Heart left ventricle (tissue), 16 donors: ENCODE measurements at regions of chr7 and their contacts with region 1.

Region 1: GRCh38 chr7:134690016-134690415 is 43.4 kb downstream of the BPGM start:
- DNase-seq: peak in 1 of 5 donors; percentile 39
- ATAC-seq: peak; percentile 63 to 89 (median 82)
- H3K4me3 ChIP-seq: peak overlapping the region in 11 of 12 donors; percentile 8 to 58 (median 45)
- H3K27ac ChIP-seq: peak overlapping the region in 9 of 12 donors; percentile 38 to 80 (median 47)
- H3K4me1 ChIP-seq: peaks cover 0 to 33% (median 7%) of the 10 kb centered on the region in 12 donors
- H3K27me3 ChIP-seq: no peaks in the 10 kb centered on the region
- CTCF ChIP-seq: peak; percentile 18 to 78 (median 58)
- POLR2A ChIP-seq: no peak

Region 2: DNA sequence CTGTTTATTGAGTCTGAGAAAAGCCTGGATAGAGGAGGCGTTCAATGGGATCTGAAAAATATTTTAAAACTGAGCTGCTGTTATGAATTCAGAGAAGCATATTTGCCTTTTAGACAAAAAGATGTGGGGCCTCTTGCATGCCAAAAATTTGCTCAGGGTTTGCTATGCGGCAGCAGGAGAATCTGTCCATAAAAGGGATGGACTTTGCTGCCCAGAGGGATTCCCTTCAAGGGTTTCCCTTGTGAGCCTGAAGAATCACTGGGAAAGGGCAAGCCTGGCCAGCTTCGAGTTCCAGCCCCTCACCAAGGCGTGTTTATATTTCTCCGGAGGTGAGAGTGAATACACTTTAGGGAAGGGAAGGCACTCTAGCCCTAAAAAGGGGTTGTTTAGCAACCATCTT is 33.9 kb after region 1 on chr7:
- intact Hi-C with region 1: loop called in 1 of 10 experiments (anchors 2 kb)
- DNase-seq: peak in 1 of 5 donors; percentile 34
- ATAC-seq: no peak
- H3K4me3 ChIP-seq: no peak overlapping the region
- H3K27ac ChIP-seq: peak overlapping the region in 9 of 12 donors; percentile 1 to 75 (median 34)
- H3K4me1 ChIP-seq: peaks cover 0 to 42% (median 6%) of the 10 kb centered on the region in 12 donors
- H3K27me3 ChIP-seq: no peaks in the 10 kb centered on the region
- CTCF ChIP-seq: no peak
- POLR2A ChIP-seq: no peak

Region 3: GRCh38 chr7:134750083-134751062 is 60.4 kb after region 1 on chr7:
- intact Hi-C with region 1: loop called in 9 of 10 experiments (anchors 2 to 10 kb)
- DNase-seq: peak; percentile 42 to 66 (median 45)
- ATAC-seq: peak in 3 of 4 donors; percentile 66 to 73 (median 72)
- H3K4me3 ChIP-seq: no peak overlapping the region
- H3K27ac ChIP-seq: no peak overlapping the region
- H3K4me1 ChIP-seq: peaks cover 0 to 12% (median 0%) of the 10 kb centered on the region in 12 donors
- H3K27me3 ChIP-seq: no peaks in the 10 kb centered on the region
- CTCF ChIP-seq: peak; percentile 46 to 77 (median 64)
- POLR2A ChIP-seq: no peak

Region 4: DNA sequence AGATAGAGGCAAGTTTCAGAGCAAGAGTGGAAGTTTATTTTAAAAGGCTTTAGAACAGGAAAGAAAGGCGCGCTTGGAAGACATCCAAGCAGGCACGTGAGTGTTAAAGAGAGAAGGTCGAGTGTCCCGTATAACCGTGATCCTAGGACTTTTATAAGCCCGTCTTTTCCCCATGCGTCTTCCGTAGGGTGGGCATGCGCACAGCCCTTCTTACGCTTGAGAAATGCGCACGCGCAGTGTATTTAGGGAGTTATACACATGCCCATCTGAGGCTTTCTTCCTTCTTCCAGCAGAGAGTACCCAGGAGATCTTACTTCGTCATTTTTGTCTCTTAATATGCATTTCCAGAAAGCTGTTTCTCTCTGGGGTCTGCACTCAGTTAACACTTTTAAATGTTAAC is 141.8 kb after region 1 on chr7:
- intact Hi-C with region 1: loop called in 1 of 10 experiments (anchors 10 kb)
- DNase-seq: peak in 4 of 5 donors; percentile 27 to 68 (median 46)
- ATAC-seq: peak in 2 of 4 donors; percentile 10 to 12
- H3K4me3 ChIP-seq: peak overlapping the region in 6 of 12 donors; percentile 7 to 35 (median 21)
- H3K27ac ChIP-seq: peak overlapping the region in 10 of 12 donors; percentile 28 to 87 (median 58)
- H3K4me1 ChIP-seq: peaks cover 0 to 94% (median 55%) of the 10 kb centered on the region in 12 donors
- H3K27me3 ChIP-seq: no peaks in the 10 kb centered on the region
- CTCF ChIP-seq: no peak
- POLR2A ChIP-seq: no peak

Region 5: DNA sequence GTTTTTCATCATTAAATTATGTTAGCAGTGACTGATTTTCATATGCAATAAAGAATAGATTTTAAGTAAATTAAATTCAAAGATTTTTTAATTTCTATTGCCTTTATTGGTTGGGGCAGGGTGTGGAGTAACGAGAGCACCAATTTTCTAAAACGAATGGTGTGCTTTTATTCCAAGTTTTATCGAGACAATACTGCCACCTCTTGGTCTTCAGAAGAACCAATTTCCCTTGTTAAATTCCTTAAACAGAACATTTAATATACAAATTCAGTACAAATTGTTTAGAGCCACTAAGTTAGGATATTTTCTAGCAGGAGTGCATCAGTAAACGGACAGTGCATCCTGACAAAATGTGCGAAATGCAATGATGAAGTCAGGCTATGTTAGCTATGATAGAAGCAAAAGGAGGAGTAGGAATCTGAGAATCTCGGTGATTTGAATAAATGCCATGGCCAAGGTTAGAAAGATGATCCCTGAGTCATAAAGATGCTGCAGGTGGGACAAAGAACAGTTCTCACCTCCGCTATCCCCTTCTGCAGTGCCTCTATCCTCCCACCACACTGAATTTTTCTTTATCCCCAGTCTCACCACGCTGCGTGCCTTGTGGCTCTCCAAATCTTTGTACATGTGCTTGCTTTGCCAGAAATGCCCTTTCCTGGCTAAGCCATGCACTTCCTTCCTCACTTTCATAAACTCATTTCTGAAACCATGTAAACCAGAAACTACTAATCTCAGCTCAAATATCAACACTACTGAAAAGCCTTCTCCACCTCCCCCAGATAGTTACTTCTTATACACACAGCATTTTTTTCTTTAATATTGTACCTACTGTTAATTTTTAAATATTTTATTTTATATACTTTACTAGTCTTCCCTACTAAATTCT is 264.4 kb after region 1 on chr7:
- intact Hi-C with region 1: loop called in 9 of 10 experiments (anchors 2 to 5 kb)
- DNase-seq: no peak
- ATAC-seq: peak in 1 of 4 donors; percentile 48
- H3K4me3 ChIP-seq: no peak overlapping the region
- H3K27ac ChIP-seq: no peak overlapping the region
- H3K4me1 ChIP-seq: no peaks in the 10 kb centered on the region
- H3K27me3 ChIP-seq: no peaks in the 10 kb centered on the region
- CTCF ChIP-seq: peak; percentile 40 to 70 (median 53)
- POLR2A ChIP-seq: no peak

Region 6: GRCh38 chr7:135274495-135275268 is 584.7 kb after region 1 on chr7:
- intact Hi-C with region 1: loop called in 1 of 10 experiments (anchors 10 kb)
- DNase-seq: peak in 3 of 5 donors; percentile 45 to 52 (median 51)
- ATAC-seq: peak; percentile 22 to 75 (median 69)
- H3K4me3 ChIP-seq: no peak overlapping the region
- H3K27ac ChIP-seq: no peak overlapping the region
- H3K4me1 ChIP-seq: peaks cover 0 to 4% (median 0%) of the 10 kb centered on the region in 12 donors
- H3K27me3 ChIP-seq: peaks cover 0 to 8% (median 0%) of the 10 kb centered on the region in 9 donors
- CTCF ChIP-seq: peak; percentile 81 to 94 (median 86)
- POLR2A ChIP-seq: no peak